BJ (cell line): ENCODE measurements at regions of chr12 and their contacts with region 1.

Region 1: DNA sequence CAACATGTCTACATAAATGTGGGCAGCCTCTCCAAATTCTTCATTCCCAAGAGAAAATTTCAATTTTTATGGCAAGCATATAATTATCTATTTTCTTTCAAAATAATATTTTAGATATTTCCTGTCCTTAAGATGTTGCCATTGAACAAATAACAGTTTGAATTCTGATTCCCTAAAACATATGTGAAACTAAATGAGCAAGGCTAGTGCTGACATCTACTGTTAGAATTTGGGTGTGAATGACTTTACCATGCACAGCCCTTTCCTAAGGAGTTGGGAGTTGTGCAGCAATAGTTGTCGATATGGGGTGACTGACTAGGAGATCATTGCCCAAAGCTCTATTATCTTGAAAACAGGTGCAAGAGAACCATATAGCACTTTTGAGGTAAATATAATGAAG is 108.2 kb upstream of the SLC38A4 start:
- DNase-seq: no peak
- H3K4me3 ChIP-seq: no peak overlapping the region
- H3K27me3 ChIP-seq: no peaks in the 10 kb centered on the region
- CTCF ChIP-seq: peak; percentile 62

Region 2: GRCh38 chr12:46675736-46676135 is 258.2 kb before region 1 on chr12:
- CTCF ChIA-PET with region 1: interaction called, 29 read pairs
- POLR2A ChIA-PET with region 1: no interaction called
- DNase-seq: no peak
- H3K4me3 ChIP-seq: no peak overlapping the region
- H3K27me3 ChIP-seq: no peaks in the 10 kb centered on the region
- CTCF ChIP-seq: peak; percentile 53

Region 3: GRCh38 chr12:46723629-46724419 is 210.1 kb before region 1 on chr12:
- CTCF ChIA-PET with region 1: no interaction called
- POLR2A ChIA-PET with region 1: no interaction called
- DNase-seq: no peak
- H3K4me3 ChIP-seq: no peak overlapping the region
- H3K27me3 ChIP-seq: no peaks in the 10 kb centered on the region
- CTCF ChIP-seq: no peak

Region 4: DNA sequence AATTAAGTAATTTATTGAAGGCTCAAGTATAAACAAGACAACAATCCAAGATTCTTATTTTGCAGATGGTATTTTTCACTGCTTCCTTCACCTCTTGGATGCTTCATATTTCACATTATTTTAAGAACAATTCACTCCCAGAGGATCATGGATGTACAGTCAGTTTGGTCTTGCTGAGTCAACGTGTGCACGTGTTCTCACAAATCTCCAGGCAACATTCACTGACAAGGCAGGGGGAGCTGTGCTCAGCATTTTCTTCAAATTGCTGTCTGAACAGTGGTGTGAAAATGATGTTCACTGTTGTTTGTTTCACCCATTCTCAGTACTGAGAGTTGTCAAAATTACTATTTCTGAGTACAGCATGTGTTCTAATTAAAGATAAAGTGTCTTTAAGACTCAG is 10.1 kb after region 1 on chr12:
- CTCF ChIA-PET with region 1: interaction called, 12 read pairs
- POLR2A ChIA-PET with region 1: interaction called, 3 read pairs
- DNase-seq: no peak
- H3K4me3 ChIP-seq: no peak overlapping the region
- H3K27me3 ChIP-seq: no peaks in the 10 kb centered on the region
- CTCF ChIP-seq: peak; percentile 38; the same call in 1 of the 2 replicates